ENCODE measurements at regions of chr4 and their contacts with region 1.

Region 1: DNA sequence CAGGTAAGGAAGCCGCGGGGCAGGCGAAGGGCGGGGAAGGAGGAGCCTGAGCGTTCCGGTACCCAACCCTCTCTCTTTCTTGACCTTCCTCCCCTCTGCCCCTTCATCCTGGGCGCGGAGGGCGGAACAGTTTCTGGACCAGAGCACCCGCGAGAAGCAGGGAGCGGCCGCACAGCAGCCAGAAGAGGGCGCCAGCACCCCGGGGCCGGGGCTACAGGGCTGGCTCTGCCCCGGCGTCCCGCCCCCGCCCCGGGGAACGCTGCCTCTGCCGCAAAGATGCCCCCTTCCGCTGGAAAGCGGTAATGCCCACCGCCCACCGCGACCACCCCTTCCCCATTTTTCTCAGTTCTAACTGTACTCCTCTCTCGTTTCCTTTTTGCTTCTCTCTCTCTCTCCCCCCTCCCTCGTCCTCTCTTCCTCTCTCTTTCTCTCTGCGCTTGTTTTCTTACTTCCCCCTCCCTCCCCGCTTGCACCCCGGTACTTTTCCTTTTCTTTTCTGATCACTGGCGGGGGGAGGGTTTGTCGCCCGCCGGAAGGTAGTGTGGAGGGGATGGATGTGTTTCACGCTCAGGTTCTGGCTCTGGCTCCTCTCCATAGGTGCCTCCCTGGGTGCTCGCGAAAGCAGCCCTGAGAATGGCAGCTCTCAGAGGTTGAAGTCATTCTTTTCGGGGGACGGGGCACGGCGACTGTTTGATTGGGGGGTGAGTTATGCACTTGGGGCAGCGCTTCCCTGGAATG is 13.1 kb upstream of the PRDM8 start:
- DNase-seq: peak; percentile 82
- ATAC-seq: peak; percentile 89
- H3K4me3 ChIP-seq: peak overlapping the region; percentile 84
- H3K27ac ChIP-seq: peak overlapping the region; percentile 91
- H3K4me1 ChIP-seq: peaks cover 9% of the 10 kb centered on the region
- H3K27me3 ChIP-seq: no peaks in the 10 kb centered on the region
- CTCF ChIP-seq: peak; percentile 99
- POLR2A ChIP-seq: no peak
- RAD21 ChIP-seq: peak; percentile 87

Region 2: DNA sequence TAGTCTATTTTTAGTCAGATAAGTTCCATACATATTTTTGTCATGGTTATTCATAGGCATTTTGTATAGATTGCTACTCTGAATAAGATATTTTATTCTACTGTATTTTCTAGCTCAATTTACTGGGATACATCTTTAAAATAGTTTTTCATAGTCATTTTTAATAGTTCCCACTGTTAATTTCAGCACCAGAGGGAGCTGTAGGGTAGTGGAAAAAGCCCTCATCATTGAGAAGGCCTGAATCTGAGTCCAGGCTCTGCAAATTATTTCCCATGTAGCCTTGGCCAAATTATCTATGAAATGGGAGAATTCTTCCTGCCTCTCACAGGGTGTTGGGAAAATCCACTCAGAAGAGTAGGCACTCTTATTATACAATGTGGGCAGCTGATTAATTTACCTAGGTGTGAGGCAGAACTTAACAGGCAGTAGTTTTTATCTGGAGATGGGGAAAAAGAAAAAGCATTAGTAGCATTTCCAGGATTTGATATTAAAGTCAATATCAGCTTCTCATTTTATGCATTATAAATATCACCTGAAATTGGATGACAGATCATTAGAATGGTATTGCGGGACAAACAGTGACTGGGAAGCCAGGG is 1142.0 kb before region 1 on chr4:
- CTCF ChIA-PET with region 1: no interaction called
- POLR2A ChIA-PET with region 1: no interaction called
- dilution Hi-C with region 1: no loop called
- in situ Hi-C with region 1: no loop called
- intact Hi-C with region 1: loop called (anchors 10 kb)
- DNase-seq: peak; percentile 22
- ATAC-seq: no peak; the same call in 1 of the 2 replicates
- H3K4me3 ChIP-seq: no peak overlapping the region
- H3K27ac ChIP-seq: no peak overlapping the region
- H3K4me1 ChIP-seq: no peaks in the 10 kb centered on the region
- H3K27me3 ChIP-seq: no peaks in the 10 kb centered on the region
- CTCF ChIP-seq: peak; percentile 48
- POLR2A ChIP-seq: no peak
- RAD21 ChIP-seq: peak; percentile 54

Region 3: GRCh38 chr4:79241846-79242245 is 942.4 kb before region 1 on chr4:
- CTCF ChIA-PET with region 1: no interaction called
- POLR2A ChIA-PET with region 1: no interaction called
- dilution Hi-C with region 1: no loop called
- in situ Hi-C with region 1: no loop called
- intact Hi-C with region 1: loop called (anchors 5 kb)
- DNase-seq: peak; percentile 49
- ATAC-seq: peak; percentile 94
- H3K4me3 ChIP-seq: no peak overlapping the region
- H3K27ac ChIP-seq: no peak overlapping the region
- H3K4me1 ChIP-seq: peaks cover 1% of the 10 kb centered on the region; the same call in 1 of the 2 replicates
- H3K27me3 ChIP-seq: no peaks in the 10 kb centered on the region
- CTCF ChIP-seq: no peak
- POLR2A ChIP-seq: no peak
- RAD21 ChIP-seq: no peak

Region 4: DNA sequence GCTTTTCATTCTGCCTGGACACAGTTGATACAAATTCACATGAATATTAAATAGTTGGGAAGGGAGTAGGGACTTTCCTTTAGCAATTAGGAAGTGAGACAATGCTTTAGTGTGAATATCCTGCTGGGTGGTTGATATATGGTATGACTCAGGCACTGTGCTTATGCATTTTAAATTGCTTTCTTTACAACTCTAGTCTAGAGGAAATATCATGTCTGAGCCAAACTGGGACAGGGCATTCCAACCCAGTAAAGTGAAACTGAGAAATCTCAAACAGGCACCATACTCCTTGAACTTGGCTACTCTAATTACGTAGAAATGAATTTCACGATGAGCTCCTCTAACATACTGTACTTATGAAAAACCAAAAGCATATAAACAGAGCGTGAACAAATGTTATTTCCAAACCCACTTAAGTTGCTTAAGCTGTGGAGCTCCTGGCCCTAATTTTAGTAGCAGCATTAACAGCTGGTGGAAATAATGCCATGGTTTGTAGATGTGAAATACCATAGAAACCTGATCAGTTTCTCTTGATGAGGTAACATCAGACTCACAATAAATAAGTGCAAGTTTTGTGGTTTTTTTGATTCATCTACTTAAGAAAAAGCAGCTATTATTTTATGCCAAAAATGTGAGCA is 533.3 kb before region 1 on chr4:
- CTCF ChIA-PET with region 1: no interaction called
- POLR2A ChIA-PET with region 1: no interaction called
- dilution Hi-C with region 1: no loop called
- in situ Hi-C with region 1: no loop called
- intact Hi-C with region 1: loop called (anchors 10 kb)
- DNase-seq: peak; percentile 77
- ATAC-seq: peak; percentile 74
- H3K4me3 ChIP-seq: no peak overlapping the region
- H3K27ac ChIP-seq: peak overlapping the region; percentile 97; the same call in 1 of the 2 replicates
- H3K4me1 ChIP-seq: peaks cover 2% of the 10 kb centered on the region
- H3K27me3 ChIP-seq: no peaks in the 10 kb centered on the region
- CTCF ChIP-seq: no peak
- POLR2A ChIP-seq: no peak
- RAD21 ChIP-seq: no peak

Region 5: DNA sequence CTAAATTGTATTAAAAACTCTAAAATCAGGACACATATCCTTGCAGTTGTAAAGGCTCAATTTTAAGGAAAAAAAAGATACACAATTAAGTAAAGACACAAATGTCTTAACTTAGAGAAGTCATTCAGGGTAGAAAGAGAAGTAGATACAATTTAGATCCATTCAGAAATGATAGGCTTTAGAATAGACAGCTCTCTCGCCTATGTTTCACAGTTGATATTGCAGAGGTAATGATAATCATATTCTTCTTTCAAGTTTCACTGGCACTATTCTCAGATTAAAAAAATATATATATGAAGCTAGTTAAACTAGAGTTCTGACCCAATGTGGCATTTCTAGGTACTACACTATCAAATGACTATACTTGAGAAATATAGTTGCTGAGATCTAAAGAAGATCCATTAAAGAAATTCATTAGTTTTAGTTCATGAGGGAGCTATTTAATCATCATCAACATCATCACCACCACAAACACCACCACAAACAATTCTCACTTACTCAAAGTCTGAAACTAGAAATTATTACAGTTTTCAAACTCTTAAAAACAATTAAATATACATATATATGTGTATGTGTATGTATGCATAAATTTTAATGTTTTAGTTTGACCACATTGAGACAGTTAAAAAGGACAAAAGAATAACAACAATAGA is 204.3 kb before region 1 on chr4:
- CTCF ChIA-PET with region 1: no interaction called
- POLR2A ChIA-PET with region 1: no interaction called
- dilution Hi-C with region 1: no loop called
- in situ Hi-C with region 1: no loop called
- intact Hi-C with region 1: no loop called
- DNase-seq: no peak
- ATAC-seq: no peak
- H3K4me3 ChIP-seq: no peak overlapping the region
- H3K27ac ChIP-seq: no peak overlapping the region
- H3K4me1 ChIP-seq: no peaks in the 10 kb centered on the region
- H3K27me3 ChIP-seq: no peaks in the 10 kb centered on the region
- CTCF ChIP-seq: no peak
- POLR2A ChIP-seq: no peak
- RAD21 ChIP-seq: no peak

Region 6: DNA sequence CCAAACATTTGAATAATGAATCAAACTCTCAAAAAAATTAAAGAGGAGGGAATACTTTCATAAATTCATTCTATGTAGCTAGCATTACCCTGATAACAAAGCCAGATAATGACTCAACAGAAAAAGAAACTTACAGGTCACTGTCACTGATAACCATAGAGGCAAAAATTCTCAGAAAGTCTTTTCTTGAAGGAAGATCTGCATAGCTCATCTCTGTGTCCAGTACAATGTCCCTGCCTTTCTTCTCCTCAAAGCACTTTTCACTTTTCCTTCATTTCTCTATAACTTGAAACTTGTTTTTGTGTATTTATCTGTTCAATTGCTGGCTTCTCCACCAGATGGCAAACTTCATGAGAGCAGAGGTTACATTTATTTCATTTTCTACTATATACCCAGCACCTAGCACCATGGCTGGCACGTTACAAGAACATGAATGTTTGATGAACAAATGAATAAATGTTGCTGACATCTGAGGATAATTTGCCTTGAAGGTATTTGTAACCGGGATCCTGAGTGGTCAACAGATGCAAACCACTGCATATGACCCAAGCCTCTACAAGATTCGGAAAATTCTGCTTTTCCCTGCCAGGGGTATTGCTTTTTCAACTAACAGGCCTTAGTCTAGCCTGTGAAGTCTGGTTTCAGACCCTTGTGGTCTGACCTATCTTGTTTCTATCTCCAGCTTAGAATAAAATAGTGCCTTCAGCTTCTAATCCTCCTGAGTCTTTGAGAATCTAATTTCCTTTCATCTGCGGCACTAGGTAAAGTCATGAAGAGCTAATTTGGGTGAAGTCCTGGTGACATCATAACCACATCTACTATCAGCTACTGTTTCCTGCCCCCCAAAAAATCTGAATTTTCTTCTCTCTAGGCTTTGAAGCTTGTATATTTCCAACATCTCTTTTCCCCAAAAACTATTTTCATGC is 58.7 kb before region 1 on chr4:
- CTCF ChIA-PET with region 1: no interaction called
- POLR2A ChIA-PET with region 1: no interaction called
- dilution Hi-C with region 1: no loop called
- in situ Hi-C with region 1: no loop called
- intact Hi-C with region 1: loop called (anchors 1 kb)
- DNase-seq: peak; percentile 50
- ATAC-seq: peak; percentile 82
- H3K4me3 ChIP-seq: no peak overlapping the region
- H3K27ac ChIP-seq: no peak overlapping the region
- H3K4me1 ChIP-seq: peaks cover 5% of the 10 kb centered on the region; the same call in 1 of the 2 replicates
- H3K27me3 ChIP-seq: no peaks in the 10 kb centered on the region
- CTCF ChIP-seq: peak; percentile 54
- POLR2A ChIP-seq: no peak
- RAD21 ChIP-seq: peak; percentile 51

Region 7: DNA sequence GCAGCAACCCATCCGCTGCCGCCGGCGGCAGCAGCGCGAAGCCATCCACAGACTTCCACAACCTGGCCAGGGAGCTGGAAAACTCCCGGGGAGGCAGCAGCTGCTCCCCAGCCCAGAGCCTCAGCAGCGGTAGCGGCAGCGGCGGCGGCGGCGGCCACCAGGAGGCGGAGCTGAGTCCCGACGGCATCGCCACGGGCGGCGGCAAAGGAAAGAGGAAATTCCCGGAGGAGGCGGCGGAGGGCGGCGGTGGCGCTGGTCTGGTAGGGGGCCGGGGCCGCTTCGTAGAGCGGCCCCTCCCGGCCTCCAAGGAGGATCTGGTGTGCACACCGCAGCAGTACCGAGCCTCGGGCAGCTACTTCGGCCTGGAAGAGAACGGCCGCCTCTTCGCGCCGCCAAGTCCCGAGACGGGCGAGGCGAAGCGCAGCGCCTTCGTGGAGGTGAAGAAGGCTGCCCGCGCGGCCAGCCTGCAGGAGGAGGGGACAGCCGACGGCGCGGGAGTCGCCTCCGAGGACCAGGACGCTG is 18.0 kb after region 1 on chr4:
- CTCF ChIA-PET with region 1: interaction called, 6 read pairs
- POLR2A ChIA-PET with region 1: no interaction called
- dilution Hi-C with region 1: no loop called
- in situ Hi-C with region 1: no loop called
- intact Hi-C with region 1: loop called (anchors 2 kb)
- DNase-seq: peak; percentile 80
- ATAC-seq: peak; percentile 75
- H3K4me3 ChIP-seq: peak overlapping the region; percentile 66
- H3K27ac ChIP-seq: peak overlapping the region; percentile 89
- H3K4me1 ChIP-seq: peaks cover 2% of the 10 kb centered on the region; the same call in 1 of the 2 replicates
- H3K27me3 ChIP-seq: no peaks in the 10 kb centered on the region
- CTCF ChIP-seq: peak; percentile 76
- POLR2A ChIP-seq: no peak
- RAD21 ChIP-seq: peak; percentile 56

Region 8: GRCh38 chr4:80221161-80221560 is 36.9 kb after region 1 on chr4:
- CTCF ChIA-PET with region 1: interaction called, 4 read pairs
- POLR2A ChIA-PET with region 1: no interaction called
- dilution Hi-C with region 1: no loop called
- in situ Hi-C with region 1: no loop called
- intact Hi-C with region 1: loop called (anchors 1 kb)
- DNase-seq: peak; percentile 61
- ATAC-seq: peak; percentile 60; the same call in 1 of the 2 replicates
- H3K4me3 ChIP-seq: no peak overlapping the region
- H3K27ac ChIP-seq: no peak overlapping the region
- H3K4me1 ChIP-seq: peaks cover 2% of the 10 kb centered on the region; the same call in 1 of the 2 replicates
- H3K27me3 ChIP-seq: no peaks in the 10 kb centered on the region
- CTCF ChIP-seq: peak; percentile 54
- POLR2A ChIP-seq: no peak
- RAD21 ChIP-seq: peak; percentile 49

Region 9: GRCh38 chr4:80255329-80256095 is 71.3 kb after region 1 on chr4:
- CTCF ChIA-PET with region 1: no interaction called
- POLR2A ChIA-PET with region 1: no interaction called
- dilution Hi-C with region 1: no loop called
- in situ Hi-C with region 1: no loop called
- intact Hi-C with region 1: no loop called
- DNase-seq: peak; percentile 58
- ATAC-seq: peak; percentile 69
- H3K4me3 ChIP-seq: peak overlapping the region; percentile 23; the same call in 1 of the 2 replicates
- H3K27ac ChIP-seq: no peak overlapping the region
- H3K4me1 ChIP-seq: peaks cover 11% of the 10 kb centered on the region
- H3K27me3 ChIP-seq: no peaks in the 10 kb centered on the region
- CTCF ChIP-seq: no peak
- POLR2A ChIP-seq: no peak
- RAD21 ChIP-seq: no peak